Left ventricle myocardium superior (tissue), 1 donor: ENCODE measurements at regions of chr6 and their contacts with region 1.

Region 1: DNA sequence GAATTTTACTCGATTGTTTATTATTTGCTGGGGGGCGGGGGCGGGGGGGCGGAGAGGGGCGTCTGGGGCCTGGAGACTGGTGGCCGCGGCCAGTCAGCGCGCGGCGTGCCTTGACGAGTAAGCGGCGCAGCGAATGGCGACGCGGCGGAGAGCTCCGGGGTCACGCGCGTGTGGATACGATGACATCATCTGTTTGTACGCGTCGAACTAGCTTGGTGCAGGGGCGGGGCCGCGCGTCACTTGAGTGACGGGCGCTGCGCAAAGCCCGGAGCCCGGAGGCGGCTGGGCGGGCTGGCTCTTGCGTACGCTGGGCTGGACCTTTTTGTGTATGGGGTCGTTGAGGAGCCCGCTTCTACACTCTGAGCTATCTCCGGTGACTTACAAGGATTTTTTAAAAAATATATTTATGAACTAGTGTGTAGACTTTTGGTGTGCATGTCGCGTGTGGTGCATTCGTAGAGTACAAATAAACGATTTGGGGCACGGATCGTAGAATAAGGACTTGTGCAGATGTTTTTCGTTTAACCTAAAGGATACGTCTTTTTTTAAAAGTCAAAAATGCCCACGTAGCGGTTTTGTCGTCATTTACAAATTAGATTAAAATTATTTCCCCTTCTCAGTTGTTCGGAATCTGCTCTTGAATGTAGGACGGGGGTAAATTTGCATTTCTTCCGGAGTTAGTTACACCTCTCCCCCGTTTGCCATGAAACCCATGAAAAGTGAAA is 2.2 kb upstream of the FOXO3 start:
- DNase-seq: peak; percentile 99
- ATAC-seq: peak; percentile 62

Region 2: DNA sequence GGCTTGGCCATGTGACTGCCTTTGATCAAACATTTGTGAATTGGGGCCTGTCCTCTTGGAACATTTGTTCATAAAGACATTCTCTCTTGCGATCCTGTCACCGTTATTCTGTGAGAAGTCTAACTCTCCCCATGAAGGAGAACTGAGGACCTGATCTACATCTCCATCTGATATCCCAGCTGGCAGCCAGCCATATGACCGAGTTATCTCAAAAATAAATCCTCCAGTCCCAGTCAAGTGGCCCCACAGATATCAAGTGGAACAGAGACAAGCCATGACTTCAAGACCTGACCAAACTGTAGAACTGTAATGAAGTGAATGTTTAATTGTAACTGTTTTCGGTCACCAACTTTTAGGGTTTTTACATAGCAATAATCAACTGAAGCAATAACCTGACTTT is 323.4 kb before region 1 on chr6:
- intact Hi-C with region 1: no loop called
- DNase-seq: no peak
- ATAC-seq: no peak

Region 3: DNA sequence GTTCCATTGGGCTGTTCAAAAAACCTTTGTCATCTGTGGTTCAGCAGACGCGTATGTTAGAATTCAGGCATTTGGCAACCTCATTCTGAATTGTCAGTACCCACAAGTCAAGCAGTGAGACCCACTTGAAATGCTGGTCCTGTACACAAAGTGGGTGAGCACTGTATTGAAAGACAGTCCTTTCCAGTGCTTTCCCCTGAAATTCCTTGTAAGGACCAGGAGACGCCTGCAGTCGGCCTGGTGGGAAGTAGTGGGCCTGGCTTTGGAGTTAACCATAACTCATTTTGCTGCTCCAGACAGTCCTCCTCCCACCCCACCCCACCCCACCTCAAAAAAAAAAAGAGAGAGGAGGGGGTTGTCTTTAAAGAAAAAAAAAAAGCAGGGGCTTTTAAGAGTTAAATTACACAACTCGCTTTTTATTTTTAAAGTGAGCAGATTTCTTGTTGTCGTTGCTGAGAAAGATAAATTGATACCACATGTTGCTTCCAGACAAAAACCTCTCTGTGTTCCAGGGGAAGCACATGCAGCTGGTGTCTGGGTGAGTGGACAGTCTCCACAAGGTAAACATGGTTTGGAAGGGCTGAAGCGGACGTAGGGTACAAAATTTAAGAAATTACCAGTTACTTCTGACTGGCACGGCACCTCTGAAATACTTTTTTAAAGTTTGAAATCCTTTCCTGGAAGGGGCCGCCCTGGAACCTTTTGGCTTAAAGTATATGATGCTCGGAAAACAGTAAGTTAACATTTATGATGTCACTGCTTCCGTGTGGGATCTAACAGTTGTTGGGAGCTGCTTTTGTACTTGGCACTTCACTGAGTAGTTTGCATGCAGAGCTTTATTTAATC is 97.5 kb after region 1 on chr6:
- intact Hi-C with region 1: loop called (anchors 10 kb)
- DNase-seq: no peak
- ATAC-seq: peak; percentile 38

Region 4: DNA sequence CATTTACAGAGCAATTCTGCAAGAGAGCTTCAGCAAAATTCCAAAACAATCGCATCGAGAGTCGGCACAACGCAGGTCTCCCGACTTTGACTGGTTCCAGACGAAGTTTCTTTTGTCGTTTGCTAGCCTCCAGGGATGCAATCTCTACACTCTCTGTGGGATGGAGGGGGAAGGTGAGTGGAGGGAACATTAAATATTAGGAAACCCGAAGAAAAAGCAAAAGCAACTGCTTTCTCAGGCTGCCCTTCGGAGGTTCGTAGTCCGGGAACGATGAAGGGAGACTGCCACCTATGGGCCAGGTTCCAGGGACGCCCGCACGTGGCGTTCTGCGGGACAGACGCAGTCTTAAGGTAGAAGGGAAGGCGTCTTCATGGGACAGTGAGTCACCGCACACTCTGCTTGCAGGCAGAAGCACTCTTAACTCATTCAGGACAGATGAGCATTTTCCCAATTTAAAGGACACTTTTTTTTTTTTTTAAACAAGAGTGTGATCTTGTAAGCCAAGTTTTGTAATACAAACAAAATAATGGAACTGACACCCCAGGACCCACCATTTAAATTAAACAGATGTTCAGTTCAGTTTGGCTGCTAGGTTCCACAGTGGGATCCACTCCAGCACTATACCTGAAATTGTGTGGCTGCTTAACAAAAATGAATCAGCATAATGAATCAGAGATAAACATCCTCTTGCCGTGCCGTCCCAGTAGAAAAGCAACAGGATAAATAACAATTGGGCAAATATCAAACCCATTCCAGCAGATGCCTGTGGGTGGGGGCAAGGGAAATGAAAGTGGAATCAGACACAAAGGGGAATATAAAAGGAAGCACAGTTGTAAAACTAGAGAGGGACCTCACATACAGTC is 223.9 kb after region 1 on chr6:
- intact Hi-C with region 1: loop called (anchors 5 kb)
- DNase-seq: peak; percentile 87
- ATAC-seq: peak; percentile 95

Region 5: GRCh38 chr6:108862479-108863191 is 304.1 kb after region 1 on chr6:
- intact Hi-C with region 1: no loop called
- DNase-seq: peak; percentile 58
- ATAC-seq: peak; percentile 86

Region 6: GRCh38 chr6:109079981-109080380 is 521.4 kb after region 1 on chr6:
- intact Hi-C with region 1: loop called (anchors 5 kb)
- DNase-seq: peak; percentile 55
- ATAC-seq: peak; percentile 84

Region 7: DNA sequence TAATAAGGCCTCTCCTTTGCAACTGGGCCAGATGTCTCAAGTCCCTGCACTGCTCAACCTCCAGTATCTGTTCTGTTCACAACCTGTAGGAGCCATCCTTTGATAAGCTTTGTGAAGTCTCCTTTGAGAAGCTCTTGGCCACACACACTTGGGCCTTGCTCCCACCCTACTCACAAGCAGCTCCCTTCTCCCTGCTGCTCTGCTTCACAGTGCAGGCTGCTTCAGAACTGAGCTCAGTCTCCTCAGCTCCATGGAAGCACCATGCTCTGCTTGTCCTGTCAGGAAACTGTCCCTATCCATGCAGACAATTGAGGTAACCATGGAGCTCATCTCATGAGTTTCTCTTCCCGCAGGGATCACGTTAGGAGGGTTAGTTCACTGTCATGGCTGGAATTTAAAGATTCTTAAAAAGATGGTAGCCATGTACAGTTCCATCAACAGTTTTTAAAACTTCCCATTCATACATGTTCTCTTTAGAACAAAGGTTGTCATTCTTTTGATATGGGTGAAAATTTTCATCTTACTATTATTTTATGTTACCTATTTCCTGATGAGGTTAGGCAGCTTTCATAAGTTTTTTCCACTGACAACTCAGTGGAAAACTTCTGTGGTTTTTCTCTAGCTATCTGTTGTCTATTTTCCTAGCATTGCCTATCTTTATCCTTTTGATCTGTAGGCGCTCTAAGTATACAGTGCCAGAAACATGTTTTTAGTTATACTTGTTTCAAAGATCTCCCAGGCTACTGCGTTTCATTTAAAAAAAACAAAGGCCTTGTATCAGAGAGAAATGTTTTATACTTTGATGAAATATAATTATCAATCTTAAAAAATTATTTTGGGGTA is 1069.8 kb after region 1 on chr6:
- intact Hi-C with region 1: no loop called
- DNase-seq: no peak
- ATAC-seq: no peak